Activated CD8-positive, alpha-beta T cell treated with anti-CD3 and anti-CD28 coated beads, Interleukin-2, amount 10 ng/mL, durations not matched to agents 7 days and 5 days (primary cell): ENCODE measurements at regions of chr22 and their contacts with region 1.

Region 1: DNA sequence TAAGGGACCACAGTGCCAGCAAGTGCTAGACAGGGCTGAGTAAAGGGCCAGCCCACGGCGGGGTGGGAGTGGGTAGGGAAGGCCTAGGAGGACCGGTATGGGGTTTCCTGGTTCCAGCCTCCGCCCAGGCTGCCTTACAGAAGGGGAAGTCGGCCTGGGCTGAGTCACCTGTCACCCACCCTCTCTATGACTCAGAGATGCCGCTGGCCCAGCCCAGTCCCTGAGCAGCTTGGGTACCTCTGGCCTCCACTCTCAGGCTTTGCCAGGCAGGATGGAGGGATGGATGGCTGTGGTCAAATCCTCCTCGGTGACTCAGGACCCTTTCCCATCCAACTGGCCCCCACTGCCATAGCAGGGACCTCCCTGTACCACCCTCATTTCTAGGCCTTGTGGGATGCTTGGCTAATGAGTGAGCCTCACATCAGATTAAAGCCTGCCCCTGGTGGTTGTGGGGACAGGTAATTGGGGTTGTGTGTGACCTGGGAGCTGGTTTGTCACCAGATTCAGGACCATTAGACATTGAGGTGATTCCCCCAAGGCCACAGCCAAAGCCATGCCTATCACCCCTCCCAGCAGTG is 13.9 kb downstream of the SLC35E4 start:
- DNase-seq: peak; percentile 77
- ATAC-seq: peak; percentile 96
- H3K4me3 Mint-ChIP-seq: no peak overlapping the region
- H3K27ac Mint-ChIP-seq: peak overlapping the region; percentile 76
- H3K4me1 Mint-ChIP-seq: peaks cover 25% of the 10 kb centered on the region
- H3K27me3 Mint-ChIP-seq: no peaks in the 10 kb centered on the region

Region 2: GRCh38 chr22:30667494-30668385 is 18.2 kb after region 1 on chr22 and contains the start of gene DUSP18:
- CTCF ChIA-PET with region 1: interaction called, 15 read pairs
- POLR2A ChIA-PET with region 1: no interaction called
- DNase-seq: peak; percentile 95
- ATAC-seq: peak; percentile 95
- H3K4me3 Mint-ChIP-seq: peak within 1 kb of the TSS; percentile 90
- H3K27ac Mint-ChIP-seq: peak within 1 kb of the TSS; percentile 83
- H3K4me1 Mint-ChIP-seq: peaks cover 15% of the 10 kb centered on the region
- H3K27me3 Mint-ChIP-seq: peaks cover 3% of the 10 kb centered on the region
- total RNA-seq, gene DUSP18: 7.0 to 7.6 TPM

Region 3: GRCh38 chr22:30979932-30980331 is 330.4 kb after region 1 on chr22:
- CTCF ChIA-PET with region 1: no interaction called
- POLR2A ChIA-PET with region 1: no interaction called
- DNase-seq: no peak
- ATAC-seq: no peak
- H3K4me3 Mint-ChIP-seq: no peak overlapping the region
- H3K27ac Mint-ChIP-seq: no peak overlapping the region
- H3K4me1 Mint-ChIP-seq: peaks cover 17% of the 10 kb centered on the region
- H3K27me3 Mint-ChIP-seq: no peaks in the 10 kb centered on the region